Heart left ventricle (tissue), 16 donors: ENCODE measurements at regions of chr4 and their contacts with region 1.

Region 1: GRCh38 chr4:115537387-115537786 is 424.0 kb upstream of the NDST4 start:
- DNase-seq: no peak
- ATAC-seq: no peak
- H3K4me3 ChIP-seq: no peak overlapping the region
- H3K27ac ChIP-seq: no peak overlapping the region
- H3K4me1 ChIP-seq: no peaks in the 10 kb centered on the region
- H3K27me3 ChIP-seq: no peaks in the 10 kb centered on the region
- CTCF ChIP-seq: peak in 5 of 12 donors; percentile 7 to 23 (median 7)
- POLR2A ChIP-seq: no peak

Region 2: GRCh38 chr4:115082633-115083032 is 454.8 kb before region 1 on chr4:
- intact Hi-C with region 1: loop called in 1 of 10 experiments (anchors 10 kb)
- DNase-seq: no peak
- ATAC-seq: no peak
- H3K4me3 ChIP-seq: no peak overlapping the region
- H3K27ac ChIP-seq: no peak overlapping the region
- H3K4me1 ChIP-seq: no peaks in the 10 kb centered on the region
- H3K27me3 ChIP-seq: no peaks in the 10 kb centered on the region
- CTCF ChIP-seq: no peak
- POLR2A ChIP-seq: no peak

Region 3: DNA sequence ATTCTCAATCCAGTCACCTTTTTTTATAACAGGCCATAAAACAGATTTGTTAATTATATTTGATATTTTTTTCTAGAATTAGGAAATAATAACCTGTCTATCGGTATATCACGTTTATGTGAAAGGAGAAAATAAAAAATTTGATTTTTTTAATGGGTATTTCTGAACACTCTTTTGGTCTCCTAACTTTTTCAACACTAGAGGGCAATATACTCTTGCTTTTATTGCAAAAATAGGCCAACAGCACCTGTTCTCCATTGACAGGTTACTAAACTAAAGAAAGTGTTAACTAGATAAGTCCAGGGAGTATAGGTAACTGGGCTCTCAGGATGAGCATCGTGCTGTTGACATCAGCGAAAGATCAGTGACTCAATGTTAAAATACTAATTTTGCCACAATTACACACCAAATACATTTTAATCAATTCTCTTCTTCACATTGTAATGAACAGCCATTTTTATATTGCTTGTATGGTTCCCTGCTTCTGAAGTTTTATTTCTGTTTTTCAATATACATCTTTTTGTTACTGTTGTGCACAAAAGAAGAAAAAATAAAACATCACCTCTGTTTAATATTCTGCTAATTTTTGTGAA is 446.8 kb before region 1 on chr4:
- intact Hi-C with region 1: loop called in 3 of 10 experiments (anchors 5 to 10 kb)
- DNase-seq: no peak
- ATAC-seq: no peak
- H3K4me3 ChIP-seq: no peak overlapping the region
- H3K27ac ChIP-seq: no peak overlapping the region
- H3K4me1 ChIP-seq: no peaks in the 10 kb centered on the region
- H3K27me3 ChIP-seq: no peaks in the 10 kb centered on the region
- CTCF ChIP-seq: peak; percentile 28 to 57 (median 37)
- POLR2A ChIP-seq: no peak

Region 4: GRCh38 chr4:115374621-115375020 is 162.8 kb before region 1 on chr4:
- intact Hi-C with region 1: no loop called
- DNase-seq: no peak
- ATAC-seq: no peak
- H3K4me3 ChIP-seq: no peak overlapping the region
- H3K27ac ChIP-seq: no peak overlapping the region
- H3K4me1 ChIP-seq: no peaks in the 10 kb centered on the region
- H3K27me3 ChIP-seq: no peaks in the 10 kb centered on the region
- CTCF ChIP-seq: no peak
- POLR2A ChIP-seq: no peak

Region 5: GRCh38 chr4:115729739-115730266 is 192.4 kb after region 1 on chr4:
- intact Hi-C with region 1: no loop called
- DNase-seq: no peak
- ATAC-seq: no peak
- H3K4me3 ChIP-seq: no peak overlapping the region
- H3K27ac ChIP-seq: no peak overlapping the region
- H3K4me1 ChIP-seq: no peaks in the 10 kb centered on the region
- H3K27me3 ChIP-seq: no peaks in the 10 kb centered on the region
- CTCF ChIP-seq: no peak
- POLR2A ChIP-seq: no peak